Right ventricle myocardium inferior (tissue), 1 donor: ENCODE measurements at regions of chr17 and their contacts with region 1.

Region 1: DNA sequence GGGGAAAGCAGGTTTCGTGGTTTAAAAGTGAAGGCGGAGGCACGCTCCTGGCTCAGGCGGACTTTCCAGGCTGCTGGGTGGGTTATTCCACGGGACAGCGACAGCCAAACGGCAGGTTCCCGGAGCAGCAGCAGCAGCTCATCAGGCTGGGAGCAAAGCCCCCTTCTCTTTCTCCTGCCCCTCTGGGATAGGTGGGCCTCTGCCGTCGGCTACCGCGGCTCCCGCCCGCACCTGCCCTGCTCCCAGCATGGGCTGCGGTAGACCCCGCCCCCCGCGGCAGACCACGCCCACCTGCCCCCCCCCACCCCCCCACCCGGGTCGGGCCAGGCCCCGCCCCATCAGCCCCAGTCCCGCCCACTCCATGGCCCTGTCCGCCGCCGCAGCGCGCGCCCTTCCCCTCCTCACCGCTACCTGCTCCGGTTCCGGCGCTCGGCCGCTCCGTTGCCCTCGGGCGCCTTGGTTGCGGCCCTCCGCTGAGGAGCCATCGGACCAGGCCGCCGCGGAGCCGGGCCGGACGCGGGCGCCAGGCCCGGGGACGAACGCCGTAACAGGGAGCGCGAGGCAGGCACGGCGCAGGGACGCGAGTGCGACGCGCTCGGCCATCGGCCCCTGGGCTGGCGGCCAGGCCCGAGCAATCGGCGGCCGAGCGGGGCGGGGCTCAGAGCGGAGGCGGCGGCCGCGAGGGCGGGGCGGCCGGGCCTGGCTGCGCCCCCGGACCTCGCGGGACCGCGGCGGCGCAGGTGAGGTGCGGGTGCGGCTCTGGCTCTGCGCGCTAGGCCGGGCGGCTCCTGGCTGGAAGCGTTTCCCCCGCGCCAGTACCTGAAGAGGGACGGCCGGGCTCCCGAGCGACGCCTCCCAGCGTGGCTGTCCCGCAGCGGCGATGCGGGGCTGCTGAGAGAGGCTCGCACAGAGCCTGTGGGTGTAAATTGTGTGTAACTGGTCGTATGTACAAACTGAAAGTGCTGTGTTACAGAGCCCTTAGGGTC is at the starts of genes HEXD and OGFOD3:
- DNase-seq: peak; percentile 92
- ATAC-seq: peak; percentile 94
- total RNA-seq, gene HEXD: 14.4 TPM
- total RNA-seq, gene OGFOD3: 23.5 TPM

Region 2: GRCh38 chr17:82351716-82352488 is 66.4 kb before region 1 on chr17:
- intact Hi-C with region 1: loop called (anchors 1 kb)
- DNase-seq: peak; percentile 89
- ATAC-seq: peak; percentile 74

Region 3: GRCh38 chr17:82450170-82451106 is 32.1 kb after region 1 on chr17 and contains the start of gene CYBC1:
- intact Hi-C with region 1: loop called (anchors 5 kb)
- DNase-seq: peak; percentile 96
- ATAC-seq: peak; percentile 96
- total RNA-seq, gene CYBC1: 29.4 TPM

Region 4: GRCh38 chr17:82648166-82648668 is 229.9 kb after region 1 on chr17 and contains the start of gene WDR45B:
- intact Hi-C with region 1: loop called (anchors 1 kb)
- DNase-seq: peak; percentile 98
- ATAC-seq: peak; percentile 98
- total RNA-seq, gene WDR45B: 38.0 TPM

Region 5: GRCh38 chr17:82658796-82659452 is 240.6 kb after region 1 on chr17:
- intact Hi-C with region 1: no loop called
- DNase-seq: peak; percentile 37
- ATAC-seq: no peak